ENCODE measurements at regions of chr9 and their contacts with region 1.

Region 1: GRCh38 chr9:27385606-27386322 is 88.8 kb upstream of the EQTN start:
- DNase-seq: peak; percentile 7
- H3K4me3 Mint-ChIP-seq: no peak overlapping the region
- H3K27ac Mint-ChIP-seq: no peak overlapping the region
- H3K4me1 Mint-ChIP-seq: peaks cover 56% of the 10 kb centered on the region
- H3K27me3 Mint-ChIP-seq: no peaks in the 10 kb centered on the region
- CTCF ChIP-seq: no peak

Region 2: DNA sequence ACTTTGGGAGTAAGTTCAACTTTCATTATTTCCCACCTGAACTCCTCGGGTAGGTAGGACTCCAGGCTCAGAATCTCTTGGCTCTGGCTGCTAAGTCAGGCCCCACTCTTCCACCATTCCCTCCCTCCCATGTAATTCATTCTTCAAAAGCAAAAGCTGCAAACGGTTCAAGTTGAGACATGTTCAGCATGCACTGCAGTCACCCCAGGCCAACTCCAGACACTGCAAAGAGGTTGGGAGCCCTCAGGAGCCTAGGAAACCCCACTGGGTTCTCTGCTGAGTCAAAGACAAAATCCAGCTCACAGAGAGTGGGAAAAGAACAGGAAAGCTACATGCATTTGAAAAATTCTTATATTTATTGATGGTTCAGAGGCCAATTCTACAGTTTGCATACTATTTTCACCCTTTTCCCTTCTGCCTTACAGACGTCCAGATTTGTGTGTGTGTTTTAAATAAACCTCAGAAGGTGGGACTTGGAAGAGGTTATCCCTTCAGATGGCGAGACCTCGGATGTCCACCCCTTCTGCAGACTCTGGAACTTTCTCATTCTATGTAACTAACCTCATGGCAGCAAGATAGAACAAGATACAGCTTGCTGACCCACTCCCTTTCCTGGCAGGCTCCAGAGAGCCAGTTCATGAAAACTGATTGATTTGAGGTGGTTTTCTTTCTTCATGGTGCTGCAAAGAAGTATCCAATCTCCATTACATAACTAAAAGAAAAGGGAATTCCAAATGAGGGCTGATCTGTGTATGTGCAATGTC is 23.1 kb before region 1 on chr9:
- CTCF ChIA-PET with region 1: interaction called, 7 read pairs
- POLR2A ChIA-PET with region 1: interaction called, 15 read pairs
- intact Hi-C with region 1: no loop called
- DNase-seq: peak; percentile 74
- H3K4me3 Mint-ChIP-seq: no peak overlapping the region
- H3K27ac Mint-ChIP-seq: peak overlapping the region; percentile 55
- H3K4me1 Mint-ChIP-seq: peaks cover 9% of the 10 kb centered on the region
- H3K27me3 Mint-ChIP-seq: no peaks in the 10 kb centered on the region
- CTCF ChIP-seq: no peak

Region 3: GRCh38 chr9:27371382-27371781 is 14.4 kb before region 1 on chr9:
- CTCF ChIA-PET with region 1: interaction called, 3 read pairs
- POLR2A ChIA-PET with region 1: interaction called, 11 read pairs
- intact Hi-C with region 1: no loop called
- DNase-seq: peak; percentile 52
- H3K4me3 Mint-ChIP-seq: peak overlapping the region; percentile 55
- H3K27ac Mint-ChIP-seq: peak overlapping the region; percentile 40
- H3K4me1 Mint-ChIP-seq: peaks cover 33% of the 10 kb centered on the region
- H3K27me3 Mint-ChIP-seq: no peaks in the 10 kb centered on the region
- CTCF ChIP-seq: no peak

Region 4: DNA sequence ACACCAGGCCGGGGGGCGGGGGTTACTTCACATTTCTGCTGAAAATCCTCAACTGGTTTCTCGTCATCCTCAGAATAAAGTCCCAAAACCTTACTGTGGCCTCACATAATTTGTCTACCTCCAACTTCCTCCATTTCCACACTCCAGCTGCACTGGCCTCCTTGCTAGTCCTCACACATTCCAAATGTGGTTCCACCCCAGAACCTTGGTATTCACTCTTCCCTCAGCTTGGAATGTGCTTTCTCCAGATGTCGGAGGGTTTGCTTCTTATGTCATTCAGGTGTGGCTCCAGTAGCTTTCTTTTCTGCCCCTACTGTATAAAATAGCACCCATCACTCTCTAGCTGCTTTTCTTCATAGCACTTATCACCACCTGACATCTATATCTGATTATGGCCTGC is 35.8 kb after region 1 on chr9:
- CTCF ChIA-PET with region 1: no interaction called
- POLR2A ChIA-PET with region 1: interaction called, 14 read pairs
- intact Hi-C with region 1: no loop called
- DNase-seq: no peak
- H3K4me3 Mint-ChIP-seq: no peak overlapping the region
- H3K27ac Mint-ChIP-seq: no peak overlapping the region
- H3K4me1 Mint-ChIP-seq: peaks cover 36% of the 10 kb centered on the region
- H3K27me3 Mint-ChIP-seq: no peaks in the 10 kb centered on the region
- CTCF ChIP-seq: no peak